ENCODE measurements at regions of chr15 and their contacts with region 1.

Region 1: GRCh38 chr15:98442379-98442833 is 205.9 kb upstream of the IGF1R start:
- DNase-seq: peak; percentile 84
- H3K4me3 ChIP-seq: no peak overlapping the region
- H3K27ac ChIP-seq: no peak overlapping the region
- H3K4me1 ChIP-seq: no peaks in the 10 kb centered on the region
- H3K27me3 ChIP-seq: no peaks in the 10 kb centered on the region
- CTCF ChIP-seq: peak; percentile 91

Region 2: DNA sequence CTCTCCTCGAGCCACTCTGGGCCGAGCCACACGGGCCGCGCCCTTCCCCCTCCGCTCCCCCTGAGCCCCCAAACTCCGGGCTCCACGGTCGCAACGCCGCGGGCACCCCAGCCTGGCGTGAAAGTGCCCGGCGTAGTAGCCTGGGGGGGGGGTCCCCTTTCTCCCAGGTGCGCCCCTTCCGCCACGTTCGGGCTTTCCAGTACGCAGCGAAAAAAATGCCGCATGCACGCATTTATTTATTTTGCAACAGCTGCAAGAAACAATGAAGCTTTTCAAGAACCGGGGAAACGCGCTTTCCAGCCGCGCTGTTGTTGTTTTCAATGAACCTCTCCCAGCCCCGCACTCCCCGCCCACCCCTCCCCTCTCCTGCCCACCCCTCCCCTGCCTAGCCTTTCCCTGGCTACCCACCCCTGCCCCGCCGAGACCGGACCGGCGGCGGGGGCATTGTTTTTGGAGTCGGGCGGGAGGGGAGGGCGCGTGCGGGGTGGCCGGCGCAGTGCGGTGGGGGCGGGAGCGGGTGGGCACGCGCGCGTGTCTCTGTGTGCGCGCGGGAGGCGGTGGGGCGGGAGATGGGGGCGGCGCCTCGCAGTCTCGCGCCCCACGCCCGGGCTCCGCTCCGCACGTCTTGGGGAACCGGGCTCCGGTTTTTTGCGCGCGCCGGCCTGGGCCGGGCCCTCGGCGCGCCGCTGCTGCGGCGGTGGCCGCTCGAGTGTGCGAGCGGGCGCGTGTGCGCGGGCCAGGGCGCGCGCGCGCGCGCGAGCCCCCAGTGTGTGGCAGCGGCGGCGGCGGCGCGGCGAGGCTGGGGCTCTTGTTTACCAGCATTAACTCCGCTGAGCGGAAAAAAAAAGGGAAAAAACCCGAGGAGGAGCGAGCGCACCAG is 205.6 kb after region 1 on chr15 and contains the start of gene IGF1R:
- CTCF ChIA-PET with region 1: no interaction called
- POLR2A ChIA-PET with region 1: no interaction called
- intact Hi-C with region 1: loop called (anchors 2 kb)
- DNase-seq: peak; percentile 96
- H3K4me3 ChIP-seq: peak within 1 kb of the TSS; percentile 87
- H3K27ac ChIP-seq: peak within 1 kb of the TSS; percentile 88
- H3K4me1 ChIP-seq: peaks cover 14% of the 10 kb centered on the region
- H3K27me3 ChIP-seq: peaks cover 35% of the 10 kb centered on the region
- CTCF ChIP-seq: 0 out of 2 replicates have a peak, but pooled peaks have one; percentile 15
- total RNA-seq, gene IGF1R: 34.9 and 41.2 TPM in 2 replicates

Region 3: DNA sequence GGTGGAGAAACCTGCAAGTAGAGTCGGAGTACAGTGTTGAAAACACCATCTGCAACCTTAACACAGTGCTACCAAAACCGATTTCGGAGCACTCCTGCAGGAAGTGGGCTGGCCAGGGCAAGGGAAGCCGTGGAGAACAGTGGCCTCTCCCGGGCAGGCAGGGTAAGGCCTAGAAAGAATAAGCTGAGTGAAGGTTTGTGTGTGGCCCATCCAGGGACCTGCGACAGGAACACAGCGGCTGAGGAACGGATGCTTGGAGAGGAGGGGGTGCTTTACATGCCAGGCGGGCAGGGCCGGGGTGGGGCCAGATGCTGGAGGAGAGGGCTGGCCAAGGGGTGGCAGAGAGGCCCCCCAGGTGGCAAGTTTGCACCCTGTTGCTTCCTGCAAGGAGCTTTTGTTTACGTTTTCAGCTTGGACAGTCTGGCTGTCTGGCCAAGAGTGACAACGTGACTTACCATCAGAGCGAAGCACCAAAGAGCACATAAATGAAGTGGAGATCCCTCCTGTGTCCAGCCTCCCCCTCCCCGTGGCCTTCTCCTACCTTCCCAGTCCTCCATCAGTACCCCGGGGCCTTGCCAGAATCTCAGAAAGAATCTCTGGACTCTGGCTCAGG is 408.7 kb after region 1 on chr15:
- CTCF ChIA-PET with region 1: no interaction called
- POLR2A ChIA-PET with region 1: no interaction called
- intact Hi-C with region 1: loop called (anchors 1 kb)
- DNase-seq: peak; percentile 89
- H3K4me3 ChIP-seq: peak overlapping the region; percentile 59
- H3K27ac ChIP-seq: no peak overlapping the region
- H3K4me1 ChIP-seq: peaks cover 29% of the 10 kb centered on the region
- H3K27me3 ChIP-seq: no peaks in the 10 kb centered on the region
- CTCF ChIP-seq: peak; percentile 88

Region 4: DNA sequence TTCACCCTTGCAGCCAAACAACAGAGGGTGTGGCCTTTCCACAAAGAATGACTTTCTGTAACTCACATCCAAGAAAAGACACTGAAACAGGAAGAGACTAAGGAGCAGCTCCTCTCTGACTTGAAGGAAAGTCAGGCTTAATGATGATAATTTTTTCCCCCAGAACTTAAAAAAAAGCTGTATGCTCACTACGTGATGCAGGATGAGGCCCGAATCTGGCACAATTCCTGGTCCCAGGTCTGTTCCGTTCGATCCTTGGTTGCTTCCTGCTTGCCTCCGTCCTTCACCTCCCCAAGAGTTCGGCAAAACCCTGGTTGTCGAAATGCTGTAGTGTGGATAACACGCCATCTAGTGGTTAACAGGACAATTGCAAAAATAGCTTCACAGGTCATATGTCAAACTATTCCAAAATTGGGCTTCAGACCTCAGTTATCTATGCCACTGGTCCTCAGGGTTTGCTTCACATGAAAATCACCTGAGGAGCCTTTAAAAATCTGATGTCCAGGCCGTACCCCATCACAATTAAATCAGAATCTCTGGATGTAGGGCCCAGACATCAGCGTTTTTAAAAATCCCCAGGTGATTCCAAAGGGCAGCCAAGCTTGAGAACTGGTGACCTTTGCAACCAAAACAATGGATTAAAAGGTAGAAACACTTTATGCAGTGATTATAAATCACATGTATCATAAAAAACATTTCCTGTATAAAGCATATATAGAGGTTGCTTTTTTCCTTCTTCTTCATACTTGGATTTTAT is 634.3 kb after region 1 on chr15:
- CTCF ChIA-PET with region 1: no interaction called
- POLR2A ChIA-PET with region 1: no interaction called
- intact Hi-C with region 1: loop called (anchors 1 kb)
- DNase-seq: peak; percentile 81
- H3K4me3 ChIP-seq: peak overlapping the region; percentile 28
- H3K27ac ChIP-seq: no peak overlapping the region
- H3K4me1 ChIP-seq: no peaks in the 10 kb centered on the region
- H3K27me3 ChIP-seq: no peaks in the 10 kb centered on the region
- CTCF ChIP-seq: peak; percentile 85

Region 5: DNA sequence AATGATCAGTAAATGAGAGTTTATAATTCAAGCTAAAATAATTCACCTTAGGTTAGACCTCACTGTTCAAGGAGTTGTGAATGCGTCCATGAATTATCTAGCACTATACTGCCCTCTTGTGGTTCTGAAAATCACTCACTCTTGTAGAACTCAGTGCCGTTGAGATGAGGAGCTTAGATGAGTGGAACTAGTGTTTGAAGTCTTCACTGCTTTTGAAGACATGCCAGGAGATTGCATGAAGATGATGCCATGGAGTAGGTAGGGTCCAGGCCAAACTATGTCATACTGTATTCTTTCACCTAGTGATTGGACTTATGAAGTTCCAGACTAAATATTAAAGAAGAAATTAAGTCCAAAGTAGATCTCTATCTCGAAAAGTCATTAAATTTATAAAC is 1262.0 kb after region 1 on chr15:
- CTCF ChIA-PET with region 1: no interaction called
- POLR2A ChIA-PET with region 1: no interaction called
- intact Hi-C with region 1: loop called (anchors 5 kb)
- DNase-seq: peak; percentile 90
- H3K4me3 ChIP-seq: no peak overlapping the region
- H3K27ac ChIP-seq: no peak overlapping the region
- H3K4me1 ChIP-seq: peaks cover 23% of the 10 kb centered on the region
- H3K27me3 ChIP-seq: no peaks in the 10 kb centered on the region
- CTCF ChIP-seq: peak; percentile 80

Measured in A673 (cell line).